ENCODE measurements at regions of chr12 and their contacts with region 1.

Region 1: GRCh38 chr12:46915836-46916235 is 90.0 kb upstream of the SLC38A4 start:
- DNase-seq: no peak
- ATAC-seq: no peak
- H3K4me3 ChIP-seq: no peak overlapping the region
- H3K27ac ChIP-seq: no peak overlapping the region
- H3K4me1 ChIP-seq: no peaks in the 10 kb centered on the region
- H3K27me3 ChIP-seq: no peaks in the 10 kb centered on the region
- CTCF ChIP-seq: no peak

Region 2: GRCh38 chr12:46895726-46896125 is 20.1 kb before region 1 on chr12:
- intact Hi-C with region 1: loop called in 1 of 3 experiments (anchors 2 kb)
- DNase-seq: no peak
- ATAC-seq: no peak
- H3K4me3 ChIP-seq: no peak overlapping the region
- H3K27ac ChIP-seq: no peak overlapping the region
- H3K4me1 ChIP-seq: no peaks in the 10 kb centered on the region
- H3K27me3 ChIP-seq: no peaks in the 10 kb centered on the region
- CTCF ChIP-seq: no peak

Region 3: GRCh38 chr12:46946137-46946536 is 30.3 kb after region 1 on chr12:
- intact Hi-C with region 1: no loop called
- DNase-seq: no peak
- ATAC-seq: no peak
- H3K4me3 ChIP-seq: no peak overlapping the region
- H3K27ac ChIP-seq: no peak overlapping the region
- H3K4me1 ChIP-seq: no peaks in the 10 kb centered on the region
- H3K27me3 ChIP-seq: no peaks in the 10 kb centered on the region
- CTCF ChIP-seq: no peak